Heart left ventricle (tissue), 16 donors: ENCODE measurements at regions of chr17 and their contacts with region 1.

Region 1: DNA sequence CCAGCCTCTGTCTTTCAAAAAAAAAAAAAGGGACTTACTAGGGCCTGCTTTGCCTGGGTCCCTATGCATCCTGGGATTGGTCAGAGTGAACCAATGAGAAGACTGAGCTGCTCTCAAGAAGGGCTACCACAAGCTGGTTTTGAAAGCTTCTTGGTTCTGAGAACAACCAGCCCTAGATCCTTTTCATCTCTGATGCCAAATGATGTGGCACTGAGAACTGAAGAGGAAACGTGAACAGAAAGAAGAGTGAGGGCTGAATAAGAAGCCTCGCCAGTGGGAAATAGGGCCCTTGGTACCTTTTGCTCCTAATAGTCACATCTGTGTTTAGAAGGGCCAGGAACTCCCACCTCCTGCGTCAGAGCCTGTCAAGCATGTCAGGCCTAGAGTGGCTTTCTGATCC is 10.7 kb downstream of the TACO1 start:
- DNase-seq: no peak
- ATAC-seq: no peak
- H3K4me3 ChIP-seq: no peak overlapping the region
- H3K27ac ChIP-seq: peak overlapping the region in 1 of 12 donors; percentile 40
- H3K4me1 ChIP-seq: peaks cover 0 to 3% (median 0%) of the 10 kb centered on the region in 12 donors
- H3K27me3 ChIP-seq: no peaks in the 10 kb centered on the region
- CTCF ChIP-seq: no peak
- POLR2A ChIP-seq: no peak

Region 2: DNA sequence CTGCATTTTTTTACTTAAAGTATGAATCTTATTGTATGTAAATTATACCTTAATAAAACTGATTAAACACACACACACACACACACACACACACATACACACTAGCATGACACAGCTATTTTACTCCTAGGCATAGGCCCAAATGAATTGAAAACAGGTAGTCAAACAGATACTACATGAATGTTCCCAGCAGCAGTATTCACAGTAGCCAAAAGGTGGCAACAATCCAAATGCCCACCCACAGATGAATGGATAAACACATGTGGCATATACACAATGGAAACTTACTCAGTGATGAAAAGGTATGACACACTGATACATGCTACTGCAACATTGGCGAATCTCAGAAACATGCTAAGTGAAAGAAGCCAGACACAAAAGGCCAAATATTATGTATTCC is 388.7 kb before region 1 on chr17:
- intact Hi-C with region 1: no loop called
- DNase-seq: no peak
- ATAC-seq: no peak
- H3K4me3 ChIP-seq: no peak overlapping the region
- H3K27ac ChIP-seq: no peak overlapping the region
- H3K4me1 ChIP-seq: no peaks in the 10 kb centered on the region
- H3K27me3 ChIP-seq: no peaks in the 10 kb centered on the region
- CTCF ChIP-seq: no peak
- POLR2A ChIP-seq: no peak

Region 3: DNA sequence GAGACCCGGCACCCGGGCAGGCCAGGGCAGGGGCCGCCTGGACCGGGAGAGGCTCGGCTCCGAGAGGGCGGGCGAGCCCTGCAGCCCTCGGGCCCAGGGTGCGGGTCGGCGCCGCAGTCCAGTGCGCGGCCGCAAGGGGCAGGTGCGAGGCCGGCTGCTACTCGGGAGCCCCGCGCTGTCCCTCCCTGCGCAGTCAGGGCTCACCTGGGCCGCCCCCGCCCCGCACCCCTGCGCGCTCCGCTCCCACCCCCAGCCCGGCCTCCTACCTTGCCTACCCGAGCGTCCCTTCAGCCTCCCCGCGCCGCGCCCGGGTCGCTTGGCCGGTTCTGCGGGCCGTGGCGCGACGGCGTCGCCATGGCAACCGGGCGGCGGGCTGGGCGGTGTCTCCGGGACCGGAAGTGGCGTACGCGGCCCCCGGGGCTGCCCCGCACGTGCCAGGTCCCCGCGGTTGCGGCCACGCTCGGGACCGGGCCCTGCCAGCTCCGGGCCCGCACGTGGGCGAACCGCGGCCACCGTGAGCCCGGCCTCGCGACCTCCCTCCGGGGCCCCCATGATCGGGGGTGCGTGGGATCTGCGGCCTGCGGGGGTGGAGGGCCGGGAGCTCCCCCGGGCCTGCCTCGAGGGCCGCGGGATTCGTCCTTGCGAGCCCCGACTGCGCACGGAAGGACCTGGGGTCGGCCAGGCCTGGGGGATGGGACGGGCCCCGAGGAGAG is 165.2 kb before region 1 on chr17 and contains the start of gene CYB561:
- intact Hi-C with region 1: loop called in 1 of 10 experiments (anchors 5 kb)
- DNase-seq: peak; percentile 68 to 89 (median 79)
- ATAC-seq: peak in 3 of 4 donors; percentile 23 to 85 (median 80)
- H3K4me3 ChIP-seq: peak within 1 kb of the TSS; percentile 34 to 84 (median 66)
- H3K27ac ChIP-seq: peak within 1 kb of the TSS; percentile 67 to 93 (median 88)
- H3K4me1 ChIP-seq: peaks cover 3 to 65% (median 38%) of the 10 kb centered on the region in 12 donors
- H3K27me3 ChIP-seq: no peaks in the 10 kb centered on the region
- CTCF ChIP-seq: peak; percentile 16 to 65 (median 52)
- POLR2A ChIP-seq: no peak
- total RNA-seq, gene CYB561: 4.8 to 19.2 (median 8.6) TPM

Region 4: DNA sequence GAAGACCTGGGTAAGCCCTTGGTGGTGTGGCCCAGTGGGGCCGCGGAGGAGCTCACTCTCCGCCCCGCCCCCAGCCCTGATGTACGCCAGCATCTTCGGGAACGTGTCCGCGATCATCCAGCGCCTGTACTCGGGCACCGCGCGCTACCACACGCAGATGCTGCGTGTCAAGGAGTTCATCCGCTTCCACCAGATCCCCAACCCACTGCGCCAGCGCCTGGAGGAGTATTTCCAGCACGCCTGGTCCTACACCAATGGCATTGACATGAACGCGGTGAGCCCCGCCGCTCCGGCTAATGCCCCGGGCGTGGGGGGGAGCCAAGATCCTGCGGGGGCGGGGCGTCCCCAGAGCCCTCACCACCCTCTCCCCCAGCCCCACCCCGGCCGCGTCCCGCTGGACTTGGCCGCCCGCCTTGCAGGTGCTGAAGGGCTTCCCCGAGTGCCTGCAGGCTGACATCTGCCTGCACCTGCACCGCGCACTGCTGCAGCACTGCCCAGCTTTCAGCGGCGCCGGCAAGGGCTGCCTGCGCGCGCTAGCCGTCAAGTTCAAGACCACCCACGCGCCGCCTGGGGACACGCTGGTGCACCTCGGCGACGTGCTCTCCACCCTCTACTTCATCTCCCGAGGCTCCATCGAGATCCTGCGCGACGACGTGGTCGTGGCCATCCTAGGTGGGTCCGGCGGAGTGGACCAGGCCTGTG is 73.2 kb before region 1 on chr17:
- intact Hi-C with region 1: no loop called
- DNase-seq: no peak
- ATAC-seq: peak in 1 of 4 donors; percentile 22
- H3K4me3 ChIP-seq: peak overlapping the region in 7 of 12 donors; percentile 1 to 27 (median 14)
- H3K27ac ChIP-seq: no peak overlapping the region
- H3K4me1 ChIP-seq: peaks cover 0 to 9% (median 6%) of the 10 kb centered on the region in 12 donors
- H3K27me3 ChIP-seq: peaks cover 6 to 40% (median 23%) of the 10 kb centered on the region in 9 donors
- CTCF ChIP-seq: no peak
- POLR2A ChIP-seq: no peak

Region 5: GRCh38 chr17:63549289-63549945 is 61.9 kb before region 1 on chr17:
- intact Hi-C with region 1: no loop called
- DNase-seq: no peak
- ATAC-seq: no peak
- H3K4me3 ChIP-seq: peak overlapping the region; percentile 16 to 99 (median 69)
- H3K27ac ChIP-seq: peak overlapping the region; percentile 79 to 97 (median 88)
- H3K4me1 ChIP-seq: peaks cover 0 to 46% (median 34%) of the 10 kb centered on the region in 12 donors
- H3K27me3 ChIP-seq: no peaks in the 10 kb centered on the region
- CTCF ChIP-seq: no peak
- POLR2A ChIP-seq: no peak